Activated T-helper 1 cell treated with anti-CD3 and anti-CD28 coated beads, Interleukin-12 subunit alpha, Interleukin-12 subunit beta, Interleukin-2, Interleukin-4 antibody, amounts not matched to agents 30 ng/mL and 10 ng/mL and 1 ng/mL, durations not matched to agents 14 hours and 24 hours and 36 hours (primary cell): ENCODE measurements at regions of chr10 and their contacts with region 1.

Region 1: GRCh38 chr10:104353325-104354048 is at the start of gene CFAP58:
- DNase-seq: peak; percentile 89
- H3K4me3 Mint-ChIP-seq: no peak within 1 kb of the TSS
- H3K27ac Mint-ChIP-seq: peak within 1 kb of the TSS; percentile 67
- H3K4me1 Mint-ChIP-seq: no peaks in the 10 kb centered on the region
- H3K27me3 Mint-ChIP-seq: peaks cover 2% of the 10 kb centered on the region
- total RNA-seq, gene CFAP58: 0.08 and 0.24 TPM in 2 replicates

Region 2: DNA sequence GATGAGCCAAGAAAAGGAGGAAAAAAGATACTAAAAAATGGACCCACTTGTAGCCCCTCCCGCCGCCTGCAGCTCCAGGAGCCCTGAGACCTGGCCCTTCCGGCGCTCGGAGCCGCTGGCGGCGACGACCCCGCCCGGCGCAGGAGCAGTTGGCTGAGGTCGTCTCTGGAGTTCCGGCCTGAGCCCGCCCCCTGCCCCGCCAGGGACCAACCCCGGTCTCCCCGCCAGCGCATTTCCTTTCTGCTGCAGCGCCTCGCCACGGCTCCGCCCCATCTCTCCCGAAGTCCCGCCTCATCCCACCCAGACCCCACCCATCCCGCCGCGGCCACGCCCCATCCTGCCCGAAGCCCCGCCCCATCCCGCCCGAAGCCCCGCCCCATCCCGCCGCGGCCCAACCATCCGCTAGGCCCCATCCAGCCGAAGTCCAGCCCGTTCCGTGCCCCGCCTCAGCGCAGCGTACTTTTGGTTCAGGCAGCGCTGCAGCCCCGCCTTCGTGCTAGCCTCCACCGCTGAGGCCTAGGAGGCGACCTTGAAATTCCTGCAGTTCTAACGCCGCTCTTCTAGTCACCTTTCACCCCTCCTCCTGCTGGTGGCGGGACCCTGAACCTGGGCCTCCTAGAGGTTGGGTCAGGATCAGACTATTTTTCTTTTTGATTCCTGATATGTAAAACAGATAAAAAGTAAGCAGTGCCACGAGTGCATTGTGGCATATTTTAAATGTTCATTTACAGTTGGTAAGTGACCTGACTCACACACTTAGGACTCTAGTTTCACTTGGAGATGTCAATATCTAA is 435.2 kb before region 1 on chr10 and contains the start of gene STN1:
- intact Hi-C with region 1: loop called (anchors 5 kb)
- DNase-seq: peak; percentile 94
- H3K4me3 Mint-ChIP-seq: peak within 1 kb of the TSS; percentile 93
- H3K27ac Mint-ChIP-seq: peak within 1 kb of the TSS; percentile 94
- H3K4me1 Mint-ChIP-seq: peaks cover 36% of the 10 kb centered on the region
- H3K27me3 Mint-ChIP-seq: no peaks in the 10 kb centered on the region
- total RNA-seq, gene STN1: 19.4 and 20.0 TPM in 2 replicates

Region 3: GRCh38 chr10:104274762-104275721 is 78.4 kb before region 1 on chr10:
- intact Hi-C with region 1: loop called (anchors 1 kb)
- DNase-seq: peak; percentile 34
- H3K4me3 Mint-ChIP-seq: no peak overlapping the region
- H3K27ac Mint-ChIP-seq: no peak overlapping the region
- H3K4me1 Mint-ChIP-seq: no peaks in the 10 kb centered on the region
- H3K27me3 Mint-ChIP-seq: peaks cover 21% of the 10 kb centered on the region

Region 4: DNA sequence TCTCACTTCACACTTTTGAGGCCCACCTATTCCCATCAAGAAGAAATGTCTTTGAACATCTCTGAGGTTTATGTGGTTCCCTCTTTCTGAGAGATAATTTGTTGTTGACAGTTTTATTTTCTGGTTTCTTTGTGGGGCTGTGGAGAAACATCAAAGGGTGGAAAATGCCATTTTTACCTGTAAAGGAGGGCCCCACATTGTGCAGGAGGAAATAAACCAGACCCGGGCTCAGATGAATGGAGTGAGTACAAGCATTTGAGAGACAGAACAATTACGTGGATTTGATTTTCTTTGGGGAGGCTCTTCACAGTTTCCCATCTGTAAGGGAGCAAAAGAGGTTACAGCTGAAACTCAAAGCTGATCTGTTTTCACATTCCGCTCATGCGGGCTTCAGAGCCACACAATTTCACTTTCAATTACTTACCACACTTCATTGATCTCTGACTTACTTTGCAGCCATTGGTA is 45.0 kb before region 1 on chr10:
- intact Hi-C with region 1: loop called (anchors 1 kb)
- DNase-seq: peak; percentile 34
- H3K4me3 Mint-ChIP-seq: peak overlapping the region; percentile 46
- H3K27ac Mint-ChIP-seq: peak overlapping the region; percentile 32
- H3K4me1 Mint-ChIP-seq: peaks cover 76% of the 10 kb centered on the region
- H3K27me3 Mint-ChIP-seq: peaks cover 2% of the 10 kb centered on the region

Region 5: GRCh38 chr10:104337974-104338735 is 15.3 kb before region 1 on chr10 and contains the start of gene ITPRIP:
- intact Hi-C with region 1: loop called (anchors 1 kb)
- DNase-seq: peak; percentile 68
- H3K4me3 Mint-ChIP-seq: peak within 1 kb of the TSS; percentile 100
- H3K27ac Mint-ChIP-seq: peak within 1 kb of the TSS; percentile 100
- H3K4me1 Mint-ChIP-seq: peaks cover 57% of the 10 kb centered on the region
- H3K27me3 Mint-ChIP-seq: peaks cover 5% of the 10 kb centered on the region
- total RNA-seq, gene ITPRIP: 17.3 and 18.1 TPM in 2 replicates

Region 6: DNA sequence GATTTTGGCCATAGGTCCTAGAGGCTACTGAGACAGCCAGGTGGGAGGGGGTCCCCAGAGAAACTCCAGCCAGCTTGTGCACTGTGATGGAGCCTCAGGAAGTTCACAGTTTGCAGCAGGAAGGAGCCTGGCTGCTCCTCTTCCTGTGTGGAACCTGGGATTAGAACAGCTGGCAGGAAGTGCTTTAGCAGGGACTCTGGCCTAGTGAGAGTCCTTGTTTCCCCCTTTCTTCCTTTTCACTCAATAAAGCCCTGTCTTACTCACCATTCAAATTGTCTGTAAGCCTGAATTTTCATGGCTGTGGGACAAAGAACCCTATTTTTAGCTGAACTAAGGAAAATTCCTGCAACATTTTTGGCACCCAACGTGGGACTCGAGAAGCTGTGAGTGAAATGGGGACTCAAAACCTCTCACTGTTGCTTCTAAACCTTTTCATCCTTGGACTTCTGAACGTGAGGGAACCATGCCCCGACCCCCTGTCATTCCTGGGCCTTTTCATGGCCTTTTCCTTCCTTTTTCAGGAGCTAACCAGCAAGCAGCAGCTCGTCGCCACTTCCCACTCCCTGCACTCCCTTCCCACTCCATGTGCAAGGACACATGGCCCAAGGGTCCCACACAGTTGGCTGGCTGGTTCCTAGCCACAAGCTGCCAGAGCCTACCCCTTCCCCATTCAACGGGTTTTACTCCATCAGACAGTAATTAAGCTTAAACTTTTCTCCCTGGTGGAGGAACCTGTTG is 254.8 kb after region 1 on chr10:
- intact Hi-C with region 1: no loop called
- DNase-seq: no peak
- H3K4me3 Mint-ChIP-seq: no peak overlapping the region
- H3K27ac Mint-ChIP-seq: no peak overlapping the region
- H3K4me1 Mint-ChIP-seq: no peaks in the 10 kb centered on the region
- H3K27me3 Mint-ChIP-seq: peaks cover 2% of the 10 kb centered on the region